ENCODE measurements at regions of chr3 and their contacts with region 1.

Region 1: GRCh38 chr3:132351222-132351806 is 34.1 kb downstream of the ACP3 start:
- DNase-seq: no peak
- H3K4me3 ChIP-seq: no peak overlapping the region
- H3K27ac ChIP-seq: no peak overlapping the region
- H3K4me1 ChIP-seq: no peaks in the 10 kb centered on the region
- H3K27me3 ChIP-seq: no peaks in the 10 kb centered on the region
- CTCF ChIP-seq: no peak
- POLR2A ChIP-seq: no peak

Region 2: GRCh38 chr3:132380920-132381319 is 29.6 kb after region 1 on chr3:
- intact Hi-C with region 1: loop called (anchors 2 kb)
- DNase-seq: no peak
- H3K4me3 ChIP-seq: no peak overlapping the region
- H3K27ac ChIP-seq: no peak overlapping the region
- H3K4me1 ChIP-seq: no peaks in the 10 kb centered on the region
- H3K27me3 ChIP-seq: no peaks in the 10 kb centered on the region
- CTCF ChIP-seq: no peak
- POLR2A ChIP-seq: no peak

Measured in breast epithelium (tissue), 4 donors.